Adrenal gland (tissue), 19 donors: ENCODE measurements at regions of chr12 and their contacts with region 1.

Region 1: GRCh38 chr12:63802012-63802608 is 22.4 kb downstream of the RXYLT1 start:
- DNase-seq: no peak
- H3K4me3 ChIP-seq: no peak overlapping the region
- H3K27ac ChIP-seq: no peak overlapping the region
- H3K4me1 ChIP-seq: no peaks in the 10 kb centered on the region
- H3K27me3 ChIP-seq: no peaks in the 10 kb centered on the region
- CTCF ChIP-seq: peak; percentile 36 to 73 (median 67)
- POLR2A ChIP-seq: no peak

Region 2: DNA sequence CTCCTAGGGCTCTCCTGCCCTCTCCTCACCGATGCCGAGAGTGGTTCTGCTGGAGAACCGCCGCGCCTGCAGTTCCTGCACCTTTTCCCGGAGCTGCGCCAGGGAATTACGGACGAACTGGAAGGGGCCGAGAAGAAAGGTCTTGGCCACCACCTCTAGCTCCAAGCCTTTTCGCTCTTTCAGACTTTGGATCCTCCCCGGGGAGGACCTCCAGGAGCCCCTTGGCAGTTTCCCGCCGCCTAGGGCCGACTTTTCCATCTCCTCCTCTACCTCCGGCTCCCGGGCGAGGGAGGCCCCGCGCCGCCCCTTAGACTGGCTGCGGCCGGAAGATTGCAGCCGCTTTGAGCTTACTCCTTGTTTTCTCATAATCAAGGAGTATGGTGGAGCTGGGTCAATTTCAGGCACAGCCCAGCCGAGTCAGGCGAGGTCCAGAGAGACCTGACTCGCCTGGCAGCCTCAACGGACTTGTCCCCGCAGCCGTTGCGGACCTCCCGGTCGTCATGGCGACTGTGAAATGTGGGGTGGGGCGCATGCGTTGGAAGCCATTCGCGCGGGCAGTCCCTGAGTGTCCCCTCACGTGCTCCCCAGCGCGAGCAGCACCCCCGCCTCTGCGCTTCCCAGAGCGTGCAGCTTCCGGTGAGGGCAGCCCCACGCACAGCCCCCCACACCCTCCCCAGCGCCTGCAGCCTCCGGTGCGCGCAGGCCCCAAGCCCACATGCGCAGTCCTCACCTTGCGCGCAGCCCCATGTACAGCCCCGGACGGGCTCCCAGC is 133.9 kb before region 1 on chr12 and contains the start of gene DPY19L2:
- intact Hi-C with region 1: loop called in 1 of 2 experiments (anchors 10 kb)
- DNase-seq: peak; percentile 83 to 93 (median 91)
- H3K4me3 ChIP-seq: peak within 1 kb of the TSS; percentile 25 to 87 (median 42)
- H3K27ac ChIP-seq: peak within 1 kb of the TSS in 4 of 5 donors; percentile 50 to 92 (median 74)
- H3K4me1 ChIP-seq: no peaks in the 10 kb centered on the region
- H3K27me3 ChIP-seq: no peaks in the 10 kb centered on the region
- CTCF ChIP-seq: peak in 1 of 6 experiments; percentile 12
- POLR2A ChIP-seq: peak in 1 of 2 donors; percentile 53
- total RNA-seq, gene DPY19L2: 3.4 to 21.5 (median 12.3) TPM